Panc1 (cell line): ENCODE measurements at regions of chr6 and their contacts with region 1.

Region 1: GRCh38 chr6:151180330-151181048 is 59.3 kb upstream of the AKAP12 start:
- DNase-seq: no peak
- ATAC-seq: no peak
- H3K4me3 ChIP-seq: no peak overlapping the region
- H3K27ac ChIP-seq: no peak overlapping the region
- H3K4me1 ChIP-seq: no peaks in the 10 kb centered on the region
- H3K27me3 ChIP-seq: no peaks in the 10 kb centered on the region
- CTCF ChIP-seq: no peak

Region 2: GRCh38 chr6:151112130-151112529 is 68.4 kb before region 1 on chr6:
- CTCF ChIA-PET with region 1: interaction called, 16 read pairs
- POLR2A ChIA-PET with region 1: no interaction called
- in situ Hi-C with region 1: no loop called
- intact Hi-C with region 1: no loop called
- DNase-seq: no peak
- ATAC-seq: no peak
- H3K4me3 ChIP-seq: no peak overlapping the region
- H3K27ac ChIP-seq: no peak overlapping the region
- H3K4me1 ChIP-seq: no peaks in the 10 kb centered on the region; the same call in 1 of the 2 replicates
- H3K27me3 ChIP-seq: no peaks in the 10 kb centered on the region
- CTCF ChIP-seq: no peak

Region 3: GRCh38 chr6:151130329-151130728 is 50.2 kb before region 1 on chr6:
- CTCF ChIA-PET with region 1: no interaction called
- POLR2A ChIA-PET with region 1: no interaction called
- in situ Hi-C with region 1: no loop called
- intact Hi-C with region 1: no loop called
- DNase-seq: no peak
- ATAC-seq: no peak
- H3K4me3 ChIP-seq: no peak overlapping the region
- H3K27ac ChIP-seq: no peak overlapping the region
- H3K4me1 ChIP-seq: no peaks in the 10 kb centered on the region; the same call in 1 of the 2 replicates
- H3K27me3 ChIP-seq: no peaks in the 10 kb centered on the region
- CTCF ChIP-seq: no peak

Region 4: GRCh38 chr6:152368761-152369624 is 1188.5 kb after region 1 on chr6:
- CTCF ChIA-PET with region 1: no interaction called
- POLR2A ChIA-PET with region 1: no interaction called
- in situ Hi-C with region 1: no loop called
- intact Hi-C with region 1: no loop called
- DNase-seq: no peak
- ATAC-seq: no peak
- H3K4me3 ChIP-seq: no peak overlapping the region
- H3K27ac ChIP-seq: no peak overlapping the region
- H3K4me1 ChIP-seq: no peaks in the 10 kb centered on the region
- H3K27me3 ChIP-seq: no peaks in the 10 kb centered on the region
- CTCF ChIP-seq: no peak